ENCODE measurements at regions of chr17 and their contacts with region 1.

Region 1: GRCh38 chr17:7687908-7688807 is at the start of gene WRAP53:
- DNase-seq: peak; percentile 98
- H3K4me3 ChIP-seq: peak within 1 kb of the TSS; percentile 52
- H3K27me3 ChIP-seq: no peaks in the 10 kb centered on the region
- CTCF ChIP-seq: peak; percentile 99
- polyA plus RNA-seq, gene WRAP53: 5.8 and 7.9 TPM in 2 replicates

Region 2: DNA sequence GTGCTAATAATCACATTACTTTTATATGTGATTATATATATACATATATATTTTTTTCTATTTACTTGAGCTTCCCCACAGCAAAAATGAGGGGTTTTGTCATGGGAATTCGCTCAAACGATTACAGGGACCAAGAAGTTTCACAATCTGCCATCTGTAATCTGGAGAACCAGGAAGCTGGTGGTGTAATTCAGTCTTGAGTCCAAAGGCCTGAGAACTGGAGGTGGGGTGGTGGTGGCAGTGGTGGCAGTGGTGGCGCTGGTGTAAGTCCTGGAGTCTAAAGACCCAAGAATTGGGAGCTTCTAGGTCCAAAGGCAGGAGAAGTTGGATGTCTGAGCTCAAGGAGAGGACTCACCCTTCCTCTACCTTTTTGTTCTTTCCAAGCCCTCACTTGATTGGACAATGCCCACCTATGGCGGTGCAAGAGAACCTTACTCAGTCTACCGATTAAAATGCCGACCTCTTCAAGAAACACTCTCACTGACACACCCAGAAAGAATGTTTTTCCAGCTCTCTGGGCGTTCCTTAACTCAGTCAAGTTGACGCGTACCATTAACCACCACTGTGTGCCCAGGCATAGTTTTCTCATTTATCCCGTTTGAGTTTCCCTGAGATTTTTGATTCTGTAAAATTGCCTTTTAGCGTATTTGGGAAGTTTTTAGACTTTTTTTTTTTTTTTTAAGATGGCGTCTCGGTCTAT is 172.1 kb before region 1 on chr17:
- CTCF ChIA-PET with region 1: interaction called, 15 read pairs
- POLR2A ChIA-PET with region 1: interaction called, 5 read pairs
- DNase-seq: no peak
- H3K4me3 ChIP-seq: no peak overlapping the region
- H3K27me3 ChIP-seq: no peaks in the 10 kb centered on the region
- CTCF ChIP-seq: no peak

Region 3: GRCh38 chr17:7589204-7589868 is 98.8 kb before region 1 on chr17:
- CTCF ChIA-PET with region 1: interaction called, 21 read pairs
- POLR2A ChIA-PET with region 1: interaction called, 7 read pairs
- DNase-seq: no peak
- H3K4me3 ChIP-seq: peak overlapping the region; percentile 22; the same call in 1 of the 2 replicates
- H3K27me3 ChIP-seq: no peaks in the 10 kb centered on the region
- CTCF ChIP-seq: peak; percentile 94

Region 4: DNA sequence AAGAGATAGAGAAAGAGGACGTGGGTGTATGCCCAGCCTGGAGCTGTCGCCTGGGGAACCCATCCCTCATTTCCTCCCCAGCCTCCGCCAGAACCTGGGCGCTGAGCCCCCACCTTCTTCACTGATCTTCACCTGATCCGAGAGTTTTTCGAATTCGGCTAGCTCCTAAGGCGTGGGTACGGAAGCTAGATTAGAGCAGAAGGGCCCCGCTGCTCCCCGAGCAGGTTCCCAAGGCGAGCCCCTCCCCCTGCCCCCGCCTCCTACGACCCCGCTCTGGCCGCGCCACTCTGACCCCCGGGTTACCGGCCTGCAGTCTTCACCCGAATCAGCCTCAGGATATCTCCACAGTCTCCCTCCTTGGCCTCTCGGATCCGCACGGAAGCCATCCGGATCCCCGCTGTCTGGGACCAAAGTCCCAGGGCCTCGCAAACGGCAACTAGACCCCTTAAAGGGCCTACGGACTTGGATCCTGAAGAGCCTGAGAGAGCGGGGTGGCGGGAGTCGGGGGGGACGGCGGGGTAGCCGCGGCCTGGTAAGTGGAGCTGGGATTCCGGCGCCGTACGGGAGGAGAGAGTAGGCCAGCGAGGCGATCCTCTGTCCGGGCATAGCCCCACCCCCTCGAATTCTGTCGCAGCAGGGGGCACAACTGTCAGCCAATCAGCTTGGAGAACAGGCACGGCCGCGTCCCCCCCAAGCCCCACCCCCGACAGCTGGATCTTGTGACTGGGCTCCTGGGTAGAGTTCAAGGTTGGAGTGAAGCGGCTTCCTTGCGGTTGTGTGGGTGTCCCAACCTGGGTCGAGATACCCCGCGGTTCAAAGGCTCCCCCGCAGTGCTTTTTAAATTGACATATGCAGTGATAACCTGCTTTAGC is 60.7 kb before region 1 on chr17 and contains the start of gene SAT2:
- CTCF ChIA-PET with region 1: interaction called, 91 read pairs
- POLR2A ChIA-PET with region 1: no interaction called
- DNase-seq: peak; percentile 60
- H3K4me3 ChIP-seq: peak within 1 kb of the TSS; percentile 57
- H3K27me3 ChIP-seq: no peaks in the 10 kb centered on the region
- CTCF ChIP-seq: no peak
- polyA plus RNA-seq, gene SAT2: 33.9 and 37.4 TPM in 2 replicates

Region 5: DNA sequence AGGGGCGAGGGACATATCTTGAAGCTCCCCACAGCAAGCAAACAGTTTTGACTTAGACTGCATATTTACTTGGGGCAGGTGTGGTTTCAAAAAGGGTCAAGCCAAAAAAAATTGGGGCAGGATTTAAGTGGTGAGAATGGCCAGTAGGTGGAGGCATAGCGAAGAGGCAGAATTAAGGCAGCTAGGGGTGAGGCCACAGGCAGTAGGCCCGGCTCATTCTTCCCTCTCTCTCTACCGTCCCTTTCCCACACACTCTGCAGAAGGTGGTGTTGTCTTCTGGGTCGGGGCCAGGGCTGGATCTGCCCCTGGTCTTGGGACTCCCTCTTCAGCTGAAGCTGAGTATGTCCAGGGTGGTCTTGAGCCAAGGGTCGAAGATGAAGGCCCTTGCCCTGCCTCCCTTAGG is 55.7 kb before region 1 on chr17:
- CTCF ChIA-PET with region 1: interaction called, 91 read pairs
- POLR2A ChIA-PET with region 1: no interaction called
- DNase-seq: no peak
- H3K4me3 ChIP-seq: no peak overlapping the region
- H3K27me3 ChIP-seq: no peaks in the 10 kb centered on the region
- CTCF ChIP-seq: peak; percentile 67

Region 6: GRCh38 chr17:7656958-7657609 is 31.1 kb before region 1 on chr17:
- CTCF ChIA-PET with region 1: interaction called, 12 read pairs
- POLR2A ChIA-PET with region 1: interaction called, 8 read pairs
- DNase-seq: no peak
- H3K4me3 ChIP-seq: no peak overlapping the region
- H3K27me3 ChIP-seq: peaks cover 25% of the 10 kb centered on the region
- CTCF ChIP-seq: no peak

Region 7: GRCh38 chr17:7673239-7673638 is 14.9 kb before region 1 on chr17:
- CTCF ChIA-PET with region 1: interaction called, 14 read pairs
- POLR2A ChIA-PET with region 1: no interaction called
- DNase-seq: no peak
- H3K4me3 ChIP-seq: no peak overlapping the region
- H3K27me3 ChIP-seq: no peaks in the 10 kb centered on the region
- CTCF ChIP-seq: peak; percentile 48

Measured in BJ (cell line).